PC-9 (cell line): ENCODE measurements at regions of chr1 and their contacts with region 1.

Region 1: GRCh38 chr1:210311726-210312493 is 16.8 kb upstream of the HHAT start:
- DNase-seq: no peak
- H3K4me3 ChIP-seq: peak overlapping the region; percentile 53; the same call in 1 of the 2 replicates
- H3K27ac ChIP-seq: no peak overlapping the region
- H3K4me1 ChIP-seq: 0 out of 2 replicates have a peak, but pooled peaks cover 10% of the 10 kb centered on the region
- H3K27me3 ChIP-seq: no peaks in the 10 kb centered on the region
- CTCF ChIP-seq: no peak

Region 2: GRCh38 chr1:208791456-208791855 is 1520.5 kb before region 1 on chr1:
- CTCF ChIA-PET with region 1: no interaction called
- POLR2A ChIA-PET with region 1: no interaction called
- intact Hi-C with region 1: no loop called
- DNase-seq: no peak
- H3K4me3 ChIP-seq: no peak overlapping the region
- H3K27ac ChIP-seq: no peak overlapping the region
- H3K4me1 ChIP-seq: no peaks in the 10 kb centered on the region
- H3K27me3 ChIP-seq: peaks cover 20% of the 10 kb centered on the region
- CTCF ChIP-seq: no peak

Region 3: DNA sequence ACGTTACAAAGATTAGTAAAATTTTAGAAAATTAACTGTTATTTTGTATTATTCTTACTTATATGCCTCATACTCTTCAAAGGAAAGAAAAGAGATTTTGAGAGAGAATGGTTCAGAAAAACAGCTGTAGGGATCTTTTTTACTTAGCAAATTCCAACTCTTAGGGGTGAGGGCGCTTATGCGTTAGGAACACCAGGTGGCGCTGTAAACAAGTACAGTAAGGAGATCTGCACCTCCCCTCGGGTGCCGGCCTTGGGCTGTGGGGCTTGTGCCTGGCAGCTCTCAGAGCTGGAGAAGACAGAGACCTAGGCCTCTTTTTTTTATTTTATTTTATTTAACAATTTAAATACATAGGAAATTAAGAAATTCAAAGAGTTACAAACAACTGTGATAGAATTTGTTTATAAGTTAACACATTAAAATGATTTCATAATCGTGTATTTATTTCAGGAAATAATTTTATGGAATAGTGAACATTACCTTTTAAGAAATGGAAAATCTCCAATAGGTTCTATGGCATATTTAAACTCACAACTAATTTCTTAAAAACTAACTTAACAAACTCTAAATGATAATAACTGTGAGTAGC is 451.5 kb before region 1 on chr1:
- CTCF ChIA-PET with region 1: no interaction called
- POLR2A ChIA-PET with region 1: no interaction called
- intact Hi-C with region 1: loop called (anchors 2 kb)
- DNase-seq: peak; percentile 58 to 69
- H3K4me3 ChIP-seq: no peak overlapping the region
- H3K27ac ChIP-seq: no peak overlapping the region
- H3K4me1 ChIP-seq: peaks cover 11% of the 10 kb centered on the region
- H3K27me3 ChIP-seq: no peaks in the 10 kb centered on the region
- CTCF ChIP-seq: peak; percentile 94

Region 4: DNA sequence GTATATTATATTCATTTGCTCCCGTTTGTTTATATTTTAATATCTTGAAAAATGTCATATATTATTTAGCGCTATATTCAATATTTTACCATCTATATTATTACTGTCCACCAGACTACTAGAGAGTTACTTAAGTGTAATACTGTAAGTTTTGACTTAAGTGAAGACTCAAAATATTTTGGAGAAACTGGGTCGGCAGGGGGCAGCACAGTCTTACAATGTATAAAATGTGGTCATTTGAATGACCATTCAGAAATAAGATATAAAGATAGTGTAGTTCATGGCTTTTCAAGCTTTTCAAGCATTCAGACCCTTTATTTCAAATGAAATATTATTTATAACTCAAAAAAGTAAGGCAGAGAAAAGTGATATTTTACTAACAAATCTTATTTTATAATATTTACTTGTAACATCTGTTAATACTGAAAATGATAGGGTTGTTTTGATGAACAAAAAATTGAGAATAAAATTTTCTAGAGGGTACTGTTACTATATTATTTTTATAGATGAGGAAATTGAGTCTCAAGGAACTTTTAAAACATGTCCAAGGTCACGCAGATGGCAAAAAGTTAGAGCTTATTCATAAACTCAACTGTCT is 168.3 kb before region 1 on chr1:
- CTCF ChIA-PET with region 1: interaction called, 21 read pairs
- POLR2A ChIA-PET with region 1: interaction called, 3 read pairs
- intact Hi-C with region 1: loop called (anchors 1 kb)
- DNase-seq: peak; percentile 41 to 74
- H3K4me3 ChIP-seq: no peak overlapping the region
- H3K27ac ChIP-seq: no peak overlapping the region
- H3K4me1 ChIP-seq: no peaks in the 10 kb centered on the region; the same call in 1 of the 2 replicates
- H3K27me3 ChIP-seq: no peaks in the 10 kb centered on the region
- CTCF ChIP-seq: peak; percentile 91

Region 5: GRCh38 chr1:210250998-210251679 is 60.8 kb before region 1 on chr1:
- CTCF ChIA-PET with region 1: no interaction called
- POLR2A ChIA-PET with region 1: interaction called, 7 read pairs
- intact Hi-C with region 1: loop called (anchors 5 kb)
- DNase-seq: peak; percentile 81 to 95
- H3K4me3 ChIP-seq: peak overlapping the region; percentile 61
- H3K27ac ChIP-seq: no peak overlapping the region
- H3K4me1 ChIP-seq: peaks cover 30% of the 10 kb centered on the region
- H3K27me3 ChIP-seq: no peaks in the 10 kb centered on the region
- CTCF ChIP-seq: no peak

Region 6: GRCh38 chr1:210366767-210367166 is 54.9 kb after region 1 on chr1:
- CTCF ChIA-PET with region 1: interaction called, 10 read pairs
- POLR2A ChIA-PET with region 1: no interaction called
- intact Hi-C with region 1: no loop called
- DNase-seq: peak; percentile 72 to 79
- H3K4me3 ChIP-seq: no peak overlapping the region
- H3K27ac ChIP-seq: peak overlapping the region; percentile 17
- H3K4me1 ChIP-seq: peaks cover 17% of the 10 kb centered on the region
- H3K27me3 ChIP-seq: no peaks in the 10 kb centered on the region
- CTCF ChIP-seq: no peak

Region 7: DNA sequence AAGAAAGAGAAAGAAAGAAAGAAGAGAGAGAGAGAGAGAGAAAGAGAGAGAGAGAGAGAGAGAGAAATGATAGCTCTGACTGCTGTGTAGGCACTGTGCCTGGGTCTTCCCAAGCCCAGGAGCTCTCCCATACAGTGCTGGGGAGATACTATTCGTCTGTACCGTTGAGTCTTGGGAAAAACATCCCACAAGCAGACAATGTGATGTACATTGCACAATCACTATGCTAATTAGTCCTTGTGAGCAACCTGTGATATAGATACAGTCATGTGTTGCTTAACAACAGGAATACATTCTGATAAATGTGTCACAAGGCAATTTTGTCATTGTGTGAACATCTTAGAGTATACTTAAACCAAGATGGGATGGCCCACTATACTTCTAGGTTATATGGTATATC is 397.8 kb after region 1 on chr1:
- CTCF ChIA-PET with region 1: no interaction called
- POLR2A ChIA-PET with region 1: interaction called, 17 read pairs
- intact Hi-C with region 1: no loop called
- DNase-seq: no peak
- H3K4me3 ChIP-seq: no peak overlapping the region
- H3K27ac ChIP-seq: no peak overlapping the region
- H3K4me1 ChIP-seq: no peaks in the 10 kb centered on the region
- H3K27me3 ChIP-seq: 0 out of 2 replicates have a peak, but pooled peaks cover 8% of the 10 kb centered on the region
- CTCF ChIP-seq: no peak